Kidney (tissue), 22 donors: ENCODE measurements at regions of chr10 and their contacts with region 1.

Region 1: DNA sequence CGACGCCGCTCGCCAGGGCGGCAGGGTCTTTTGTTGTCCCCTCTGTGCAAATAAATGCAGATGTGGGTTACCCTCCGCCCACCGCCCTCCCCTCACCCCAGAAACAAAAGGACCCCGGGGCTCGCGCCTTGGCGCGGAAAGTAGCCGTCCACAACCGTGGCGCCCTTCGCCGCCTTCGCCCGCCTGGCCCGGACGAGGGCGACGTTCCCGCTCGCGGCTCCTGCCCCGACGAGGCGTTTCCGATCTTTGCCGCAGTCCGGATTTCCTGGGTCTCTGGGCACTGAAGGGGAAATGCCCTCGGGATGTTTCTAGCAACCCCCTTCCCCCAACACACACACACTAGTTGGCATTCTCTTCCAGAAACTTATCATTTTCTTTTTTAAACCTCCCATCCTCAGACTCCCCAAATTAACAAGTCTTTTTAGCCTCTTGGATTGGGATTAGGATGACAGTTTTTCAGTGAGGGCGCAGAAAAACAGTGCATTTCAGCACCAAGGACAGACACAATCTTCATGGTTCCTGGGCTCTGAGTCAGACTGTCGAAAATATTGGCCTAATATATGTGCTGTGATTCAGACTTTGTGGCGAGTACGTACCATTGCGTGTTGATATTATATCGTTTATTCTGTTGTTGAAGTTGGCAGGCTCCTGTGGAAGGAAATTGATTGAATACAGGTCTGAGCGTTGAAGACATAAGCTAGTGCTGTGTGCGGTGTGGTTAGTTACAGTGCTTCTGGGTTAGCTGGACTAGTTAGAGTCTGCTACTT is 771 bp downstream of the PHYHIPL start:
- DNase-seq: peak in 4 of 5 donors; percentile 61 to 91 (median 80)
- H3K4me3 ChIP-seq: peak overlapping the region; percentile 59 to 86 (median 63)
- H3K27ac ChIP-seq: peak overlapping the region; percentile 45 to 83
- H3K4me1 ChIP-seq: peaks cover 0 to 4% (median 0%) of the 10 kb centered on the region in 3 donors
- H3K27me3 ChIP-seq: peaks cover 5% of the 10 kb centered on the region
- CTCF ChIP-seq: no peak

Region 2: GRCh38 chr10:58943256-58943890 is 233.8 kb before region 1 on chr10:
- intact Hi-C with region 1: loop called (anchors 10 kb)
- DNase-seq: no peak
- H3K4me3 ChIP-seq: no peak overlapping the region
- H3K27ac ChIP-seq: no peak overlapping the region
- H3K4me1 ChIP-seq: no peaks in the 10 kb centered on the region
- H3K27me3 ChIP-seq: no peaks in the 10 kb centered on the region
- CTCF ChIP-seq: no peak

Region 3: GRCh38 chr10:58967551-58968388 is 209.4 kb before region 1 on chr10:
- intact Hi-C with region 1: no loop called
- DNase-seq: peak; percentile 61 to 88 (median 69)
- H3K4me3 ChIP-seq: no peak overlapping the region
- H3K27ac ChIP-seq: no peak overlapping the region
- H3K4me1 ChIP-seq: no peaks in the 10 kb centered on the region
- H3K27me3 ChIP-seq: no peaks in the 10 kb centered on the region
- CTCF ChIP-seq: no peak

Region 4: DNA sequence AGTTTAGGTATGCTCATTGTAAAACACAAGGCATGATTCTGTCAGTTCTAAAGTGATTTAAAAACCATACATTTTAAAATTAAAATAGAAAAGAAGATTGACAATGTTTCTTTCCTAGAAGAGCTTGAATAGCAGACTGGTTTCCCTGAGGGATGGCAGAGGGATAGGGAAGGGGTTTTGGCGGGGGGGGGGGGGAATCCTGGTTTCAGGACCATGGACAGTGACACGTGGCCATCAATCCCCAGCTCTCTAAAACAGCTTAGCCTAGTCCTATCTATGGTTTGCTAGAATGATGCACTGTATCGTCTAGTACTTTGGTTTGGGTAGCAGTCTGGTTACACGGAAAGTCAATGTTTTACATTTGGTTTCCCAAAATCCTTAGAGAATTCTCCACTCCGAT is 87.9 kb after region 1 on chr10:
- intact Hi-C with region 1: no loop called
- DNase-seq: peak in 2 of 5 donors; percentile 8 to 42
- H3K4me3 ChIP-seq: no peak overlapping the region
- H3K27ac ChIP-seq: no peak overlapping the region
- H3K4me1 ChIP-seq: no peaks in the 10 kb centered on the region
- H3K27me3 ChIP-seq: no peaks in the 10 kb centered on the region
- CTCF ChIP-seq: no peak